ENCODE measurements at regions of chr7 and their contacts with region 1.

Region 1: DNA sequence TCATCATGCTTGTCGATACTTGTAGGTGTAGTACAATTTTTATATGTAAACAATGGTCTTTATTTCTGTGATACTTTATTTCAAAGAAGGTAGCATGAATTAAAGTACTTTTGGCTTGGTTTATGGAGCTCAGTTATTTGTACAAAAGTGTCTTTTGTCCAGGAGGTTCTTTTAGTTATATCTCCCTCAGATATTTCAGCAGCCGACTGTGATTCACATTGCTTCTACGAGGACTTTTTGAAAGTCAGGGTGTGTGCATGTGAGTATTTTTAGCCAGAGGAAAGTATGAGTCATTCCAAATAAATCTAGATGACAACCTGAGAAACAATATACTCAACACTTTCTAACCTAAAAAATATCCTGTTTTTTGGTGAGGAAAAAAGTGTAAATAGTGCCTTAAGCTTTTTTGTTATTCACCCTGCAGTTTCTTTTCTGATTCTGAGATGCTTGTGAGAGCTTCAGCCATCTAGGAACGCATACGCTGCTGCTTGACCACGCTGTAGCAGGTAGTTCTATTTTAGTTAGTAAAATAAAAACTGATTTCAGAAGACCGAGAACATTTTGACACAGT is 595 bp upstream of the SUN1 start:
- DNase-seq: peak; percentile 90
- ATAC-seq: peak; percentile 62
- H3K4me3 ChIP-seq: peak overlapping the region; percentile 65
- H3K27ac ChIP-seq: peak overlapping the region; percentile 99
- H3K4me1 ChIP-seq: peaks cover 56% of the 10 kb centered on the region
- H3K27me3 ChIP-seq: no peaks in the 10 kb centered on the region
- CTCF ChIP-seq: no peak

Region 2: GRCh38 chr7:636396-636795 is 195.3 kb before region 1 on chr7:
- CTCF ChIA-PET with region 1: no interaction called
- POLR2A ChIA-PET with region 1: interaction called, 13 read pairs
- intact Hi-C with region 1: no loop called
- DNase-seq: peak; percentile 71
- ATAC-seq: peak; percentile 86
- H3K4me3 ChIP-seq: peak overlapping the region; percentile 70
- H3K27ac ChIP-seq: peak overlapping the region; percentile 61
- H3K4me1 ChIP-seq: peaks cover 15% of the 10 kb centered on the region
- H3K27me3 ChIP-seq: no peaks in the 10 kb centered on the region
- CTCF ChIP-seq: peak; percentile 75

Region 3: GRCh38 chr7:786472-787255 is 45.0 kb before region 1 on chr7:
- CTCF ChIA-PET with region 1: no interaction called
- POLR2A ChIA-PET with region 1: interaction called, 4 read pairs
- intact Hi-C with region 1: loop called (anchors 1 kb)
- DNase-seq: peak; percentile 71
- ATAC-seq: peak; percentile 85
- H3K4me3 ChIP-seq: no peak overlapping the region
- H3K27ac ChIP-seq: no peak overlapping the region
- H3K4me1 ChIP-seq: no peaks in the 10 kb centered on the region
- H3K27me3 ChIP-seq: no peaks in the 10 kb centered on the region
- CTCF ChIP-seq: peak; percentile 88

Region 4: GRCh38 chr7:816300-816750 is 15.4 kb before region 1 on chr7:
- CTCF ChIA-PET with region 1: interaction called, 15 read pairs
- POLR2A ChIA-PET with region 1: interaction called, 25 read pairs
- intact Hi-C with region 1: loop called (anchors 1 kb)
- DNase-seq: peak; percentile 98
- ATAC-seq: peak; percentile 87
- H3K4me3 ChIP-seq: peak overlapping the region; percentile 84
- H3K27ac ChIP-seq: no peak overlapping the region
- H3K4me1 ChIP-seq: peaks cover 40% of the 10 kb centered on the region
- H3K27me3 ChIP-seq: no peaks in the 10 kb centered on the region
- CTCF ChIP-seq: no peak

Region 5: GRCh38 chr7:876167-876967 is 44.7 kb after region 1 on chr7 and contains the start of gene GET4:
- CTCF ChIA-PET with region 1: interaction called, 14 read pairs
- POLR2A ChIA-PET with region 1: no interaction called
- intact Hi-C with region 1: loop called (anchors 1 kb)
- DNase-seq: peak; percentile 90
- ATAC-seq: peak; percentile 80
- H3K4me3 ChIP-seq: peak within 1 kb of the TSS; percentile 97
- H3K27ac ChIP-seq: peak within 1 kb of the TSS; percentile 30
- H3K4me1 ChIP-seq: peaks cover 28% of the 10 kb centered on the region
- H3K27me3 ChIP-seq: no peaks in the 10 kb centered on the region
- CTCF ChIP-seq: no peak
- total RNA-seq, gene GET4: 96.7 and 115 TPM in 2 replicates

Region 6: GRCh38 chr7:1044191-1045068 is 212.7 kb after region 1 on chr7 and contains the start of gene GPR146:
- CTCF ChIA-PET with region 1: no interaction called
- POLR2A ChIA-PET with region 1: no interaction called
- intact Hi-C with region 1: loop called (anchors 5 kb)
- DNase-seq: peak; percentile 95
- ATAC-seq: peak; percentile 91
- H3K4me3 ChIP-seq: peak within 1 kb of the TSS; percentile 88
- H3K27ac ChIP-seq: peak within 1 kb of the TSS; percentile 93
- H3K4me1 ChIP-seq: peaks cover 30% of the 10 kb centered on the region
- H3K27me3 ChIP-seq: no peaks in the 10 kb centered on the region
- CTCF ChIP-seq: peak; percentile 69
- total RNA-seq, gene GPR146: 2.0 and 2.7 TPM in 2 replicates

Measured in PC-3 (cell line).